Tibial artery (tissue), 4 donors: ENCODE measurements at regions of chr15 and their contacts with region 1.

Region 1: DNA sequence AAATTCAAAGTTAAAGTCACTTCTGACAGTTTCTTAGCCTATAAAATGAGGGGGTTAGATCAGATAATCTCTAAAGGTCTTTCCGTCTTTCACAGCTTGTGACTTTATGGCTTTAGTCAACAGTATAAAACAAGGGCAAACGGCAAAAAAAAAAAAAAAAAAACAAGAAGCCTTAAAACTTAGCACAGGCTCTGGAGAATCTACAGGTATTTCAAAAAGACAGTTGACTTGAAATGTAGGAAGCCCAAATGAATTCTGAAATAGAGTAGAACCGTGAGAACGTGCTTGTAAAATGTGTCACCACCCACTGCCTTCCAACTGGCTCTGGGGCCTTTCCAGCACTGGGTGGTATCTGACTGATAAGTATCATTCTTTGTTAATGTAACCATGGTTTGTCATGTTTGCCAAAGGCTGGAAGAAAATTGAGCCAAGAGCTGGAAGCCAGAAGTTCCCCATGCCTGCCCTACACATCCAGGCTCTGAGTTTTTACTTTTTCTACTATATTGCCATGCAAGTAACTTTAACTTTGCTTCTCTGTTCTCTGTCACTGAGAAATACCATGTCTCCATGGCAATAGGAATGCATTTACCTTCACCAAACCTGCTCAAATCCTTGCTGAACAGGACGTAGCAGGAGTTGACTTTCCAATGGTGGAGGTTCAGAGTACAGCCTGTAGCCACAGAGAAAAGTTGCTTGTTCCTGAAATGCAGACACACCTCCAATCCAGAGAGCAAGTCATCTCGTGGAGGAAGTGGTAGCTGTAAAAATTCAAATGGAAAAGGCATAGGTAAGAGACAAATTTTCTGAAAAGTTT is 35.9 kb upstream of the THSD4 start:
- DNase-seq: peak; percentile 65 to 86
- H3K4me3 ChIP-seq: no peak overlapping the region
- H3K27ac ChIP-seq: peak overlapping the region; percentile 83 to 84
- H3K4me1 ChIP-seq: peaks cover 3 to 59% (median 37%) of the 10 kb centered on the region in 4 donors
- H3K27me3 ChIP-seq: no peaks in the 10 kb centered on the region
- CTCF ChIP-seq: no peak

Region 2: DNA sequence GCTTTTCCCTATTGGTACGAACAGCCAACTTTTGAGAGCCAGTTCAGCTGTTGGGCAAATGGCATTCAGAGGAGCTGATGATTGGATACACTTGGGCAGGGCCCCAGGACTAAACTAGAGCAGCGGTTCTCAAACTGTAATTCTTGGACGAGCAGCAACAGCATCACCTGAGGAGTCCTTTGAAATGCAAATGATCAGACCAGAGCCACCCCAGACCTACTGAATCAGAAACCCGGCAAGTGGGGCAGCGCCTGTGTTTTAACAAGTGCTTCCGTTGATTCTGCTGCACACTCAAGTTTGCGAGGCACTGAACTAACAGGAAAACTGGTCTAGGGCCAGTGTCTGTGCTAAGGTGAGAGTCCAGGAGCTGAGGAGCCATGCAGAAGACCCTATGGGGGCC is 555.8 kb before region 1 on chr15:
- intact Hi-C with region 1: no loop called
- DNase-seq: no peak
- H3K4me3 ChIP-seq: no peak overlapping the region
- H3K27ac ChIP-seq: no peak overlapping the region
- H3K4me1 ChIP-seq: peaks cover 0 to 7% (median 3%) of the 10 kb centered on the region in 4 donors
- H3K27me3 ChIP-seq: peaks cover 0 to 6% of the 10 kb centered on the region in 2 donors
- CTCF ChIP-seq: no peak

Region 3: GRCh38 chr15:71125831-71126453 is 46.5 kb after region 1 on chr15:
- intact Hi-C with region 1: loop called (anchors 10 kb)
- DNase-seq: no peak
- H3K4me3 ChIP-seq: peak overlapping the region; percentile 1 to 18
- H3K27ac ChIP-seq: peak overlapping the region; percentile 80 to 85
- H3K4me1 ChIP-seq: peaks cover 0 to 45% (median 16%) of the 10 kb centered on the region in 4 donors
- H3K27me3 ChIP-seq: no peaks in the 10 kb centered on the region
- CTCF ChIP-seq: peak; percentile 30 to 33

Region 4: GRCh38 chr15:71237456-71238188 is 158.2 kb after region 1 on chr15:
- intact Hi-C with region 1: no loop called
- DNase-seq: no peak
- H3K4me3 ChIP-seq: no peak overlapping the region
- H3K27ac ChIP-seq: no peak overlapping the region
- H3K4me1 ChIP-seq: no peaks in the 10 kb centered on the region
- H3K27me3 ChIP-seq: no peaks in the 10 kb centered on the region
- CTCF ChIP-seq: no peak